Heart left ventricle (tissue), 16 donors: ENCODE measurements at regions of chr4 and their contacts with region 1.

Region 1: DNA sequence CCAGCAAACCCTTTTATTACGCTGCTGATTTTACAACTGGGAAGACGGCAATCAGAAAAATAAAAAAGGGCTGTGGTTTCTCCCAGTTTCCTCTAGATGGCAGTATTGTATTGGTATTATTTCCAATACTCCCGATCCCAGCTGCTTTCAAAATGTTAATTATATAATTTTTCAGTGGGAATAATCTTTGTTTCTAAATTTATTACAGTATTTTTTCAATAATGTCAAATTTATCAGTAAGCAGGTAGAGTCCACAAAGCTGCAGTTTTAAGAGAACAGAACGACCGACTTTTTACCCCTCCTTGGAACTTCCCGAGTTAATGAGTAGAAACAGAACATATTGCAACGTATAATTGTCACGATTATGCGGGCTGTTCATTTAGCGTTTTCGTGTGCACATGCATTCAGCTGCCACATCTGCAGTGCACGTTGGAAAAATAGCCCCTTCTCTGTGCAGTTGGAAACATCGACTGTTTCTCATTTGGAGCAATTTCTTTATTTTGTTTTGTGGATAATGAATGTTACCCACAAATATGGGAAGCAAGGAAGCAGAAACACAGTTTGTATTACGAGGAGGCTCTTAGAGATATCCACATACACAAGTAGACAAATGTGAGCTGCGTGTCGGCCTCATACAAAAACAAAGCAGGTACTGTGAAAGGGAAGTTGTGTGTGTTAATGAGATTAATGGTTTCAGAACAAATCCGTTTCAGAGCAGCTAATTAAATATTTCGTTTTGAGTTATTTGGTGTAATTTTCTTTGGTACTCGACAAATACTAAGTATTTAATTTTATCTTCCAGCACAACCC is 188.0 kb downstream of the STIM2 start:
- DNase-seq: no peak
- ATAC-seq: no peak
- H3K4me3 ChIP-seq: peak overlapping the region in 9 of 12 donors; percentile 14 to 46 (median 31)
- H3K27ac ChIP-seq: no peak overlapping the region
- H3K4me1 ChIP-seq: peaks cover 0 to 9% (median 0%) of the 10 kb centered on the region in 12 donors
- H3K27me3 ChIP-seq: peaks cover 0 to 26% (median 0%) of the 10 kb centered on the region in 9 donors
- CTCF ChIP-seq: peak; percentile 69 to 87 (median 78)
- POLR2A ChIP-seq: no peak

Region 2: GRCh38 chr4:26964994-26965393 is 83.6 kb before region 1 on chr4:
- intact Hi-C with region 1: no loop called
- DNase-seq: no peak
- ATAC-seq: no peak
- H3K4me3 ChIP-seq: no peak overlapping the region
- H3K27ac ChIP-seq: no peak overlapping the region
- H3K4me1 ChIP-seq: peaks cover 0 to 9% (median 0%) of the 10 kb centered on the region in 12 donors
- H3K27me3 ChIP-seq: no peaks in the 10 kb centered on the region
- CTCF ChIP-seq: no peak
- POLR2A ChIP-seq: no peak

Region 3: DNA sequence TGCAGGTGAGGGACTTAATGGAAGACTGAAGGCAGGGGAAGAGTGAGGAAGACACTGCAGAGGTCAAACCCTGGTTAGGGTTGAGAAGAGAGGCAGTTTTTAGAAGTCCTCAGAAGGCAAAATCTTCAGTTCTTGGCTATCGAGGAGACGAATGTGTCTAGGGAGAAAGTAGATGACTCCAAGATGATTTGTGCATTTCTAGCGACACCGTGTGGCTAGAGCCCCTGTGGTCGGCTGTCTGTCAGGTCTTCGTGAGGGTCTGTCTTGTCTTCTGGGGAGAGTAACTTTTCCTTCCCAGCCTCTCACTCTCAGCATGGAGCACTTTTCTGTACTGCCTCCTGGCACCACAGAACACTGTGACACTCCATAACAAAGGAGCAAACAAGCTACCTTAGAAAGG is 270.1 kb after region 1 on chr4:
- intact Hi-C with region 1: loop called in 4 of 10 experiments (anchors 5 to 10 kb)
- DNase-seq: peak in 1 of 5 donors; percentile 19
- ATAC-seq: no peak
- H3K4me3 ChIP-seq: no peak overlapping the region
- H3K27ac ChIP-seq: no peak overlapping the region
- H3K4me1 ChIP-seq: no peaks in the 10 kb centered on the region
- H3K27me3 ChIP-seq: no peaks in the 10 kb centered on the region
- CTCF ChIP-seq: peak in 6 of 12 donors; percentile 17 to 51 (median 40)
- POLR2A ChIP-seq: no peak

Region 4: DNA sequence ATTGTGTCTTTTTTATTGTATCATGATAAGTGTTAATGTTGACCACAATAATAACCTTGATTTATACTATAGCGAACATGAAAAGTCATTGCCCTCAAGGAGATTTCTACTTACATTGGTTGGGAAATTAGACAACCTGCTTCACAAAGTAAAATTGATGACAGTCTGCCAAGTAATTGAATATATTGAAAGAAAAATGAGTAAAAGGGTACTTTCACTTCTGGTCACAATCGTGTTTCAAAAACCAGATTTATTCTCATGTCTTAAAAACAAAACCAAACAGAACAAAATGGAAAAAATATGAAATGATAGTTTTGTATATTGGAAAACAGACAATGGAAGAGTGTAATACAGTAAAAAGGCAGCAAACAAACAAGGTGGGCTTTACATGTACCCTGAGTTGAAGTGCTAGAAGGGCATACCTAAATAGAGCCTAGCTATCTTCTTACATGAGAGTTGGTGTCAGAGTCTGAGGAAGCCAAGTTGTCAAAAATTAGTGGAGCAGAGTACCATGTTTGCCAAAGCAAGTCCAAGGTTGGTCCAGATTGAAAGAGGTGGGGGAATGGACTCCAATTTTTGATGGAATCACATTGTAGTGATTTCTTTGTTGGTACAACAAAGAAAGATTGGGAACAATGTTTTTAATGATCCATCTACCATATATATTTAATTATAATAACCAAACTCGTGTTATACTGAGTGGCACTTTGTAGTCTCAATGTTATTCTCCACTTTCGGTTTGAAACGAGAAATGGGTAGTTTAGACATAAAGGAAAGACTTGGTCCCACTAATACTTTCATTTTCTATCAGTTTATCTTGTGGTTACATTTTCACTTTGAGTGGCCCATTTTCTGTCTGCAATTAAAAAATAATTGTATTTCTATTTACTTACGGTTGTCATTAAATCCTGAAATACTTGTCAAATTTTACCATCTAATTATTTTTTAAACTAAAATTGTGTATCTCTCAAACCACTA is 587.6 kb after region 1 on chr4:
- intact Hi-C with region 1: loop called in 1 of 10 experiments (anchors 10 kb)
- DNase-seq: no peak
- ATAC-seq: no peak
- H3K4me3 ChIP-seq: no peak overlapping the region
- H3K27ac ChIP-seq: no peak overlapping the region
- H3K4me1 ChIP-seq: no peaks in the 10 kb centered on the region
- H3K27me3 ChIP-seq: no peaks in the 10 kb centered on the region
- CTCF ChIP-seq: no peak
- POLR2A ChIP-seq: no peak